ENCODE measurements at regions of chr16 and their contacts with region 1.

Region 1: GRCh38 chr16:1331712-1332617 is 1.5 kb upstream of the BAIAP3 start:
- DNase-seq: peak; percentile 97
- H3K4me3 ChIP-seq: peak overlapping the region; percentile 57
- H3K27ac ChIP-seq: peak overlapping the region; percentile 71
- H3K4me1 ChIP-seq: peaks cover 31% of the 10 kb centered on the region
- CTCF ChIP-seq: no peak

Region 2: DNA sequence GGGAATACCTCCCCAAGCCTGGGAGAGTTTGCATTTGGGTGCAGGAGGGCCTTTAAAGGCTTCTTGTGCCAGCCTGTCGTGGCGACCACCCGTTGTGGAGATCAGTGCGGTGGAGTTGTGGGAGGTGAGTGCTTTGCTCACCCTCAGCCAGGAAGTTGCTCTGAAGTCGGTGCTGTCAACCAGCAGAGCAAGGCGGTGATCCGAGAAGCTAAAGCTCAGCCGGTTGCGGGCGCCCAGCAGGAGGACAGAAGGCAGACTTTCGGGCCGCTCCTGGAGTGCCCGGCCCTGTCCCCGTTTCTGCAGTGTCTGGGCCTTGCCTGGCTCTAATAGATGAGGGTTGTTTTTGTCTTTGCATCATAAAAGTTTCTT is 21.1 kb before region 1 on chr16:
- CTCF ChIA-PET with region 1: no interaction called
- POLR2A ChIA-PET with region 1: no interaction called
- intact Hi-C with region 1: no loop called
- DNase-seq: peak; percentile 71
- H3K4me3 ChIP-seq: peak overlapping the region; percentile 99
- H3K27ac ChIP-seq: peak overlapping the region; percentile 62
- H3K4me1 ChIP-seq: peaks cover 17% of the 10 kb centered on the region
- CTCF ChIP-seq: no peak

Region 3: DNA sequence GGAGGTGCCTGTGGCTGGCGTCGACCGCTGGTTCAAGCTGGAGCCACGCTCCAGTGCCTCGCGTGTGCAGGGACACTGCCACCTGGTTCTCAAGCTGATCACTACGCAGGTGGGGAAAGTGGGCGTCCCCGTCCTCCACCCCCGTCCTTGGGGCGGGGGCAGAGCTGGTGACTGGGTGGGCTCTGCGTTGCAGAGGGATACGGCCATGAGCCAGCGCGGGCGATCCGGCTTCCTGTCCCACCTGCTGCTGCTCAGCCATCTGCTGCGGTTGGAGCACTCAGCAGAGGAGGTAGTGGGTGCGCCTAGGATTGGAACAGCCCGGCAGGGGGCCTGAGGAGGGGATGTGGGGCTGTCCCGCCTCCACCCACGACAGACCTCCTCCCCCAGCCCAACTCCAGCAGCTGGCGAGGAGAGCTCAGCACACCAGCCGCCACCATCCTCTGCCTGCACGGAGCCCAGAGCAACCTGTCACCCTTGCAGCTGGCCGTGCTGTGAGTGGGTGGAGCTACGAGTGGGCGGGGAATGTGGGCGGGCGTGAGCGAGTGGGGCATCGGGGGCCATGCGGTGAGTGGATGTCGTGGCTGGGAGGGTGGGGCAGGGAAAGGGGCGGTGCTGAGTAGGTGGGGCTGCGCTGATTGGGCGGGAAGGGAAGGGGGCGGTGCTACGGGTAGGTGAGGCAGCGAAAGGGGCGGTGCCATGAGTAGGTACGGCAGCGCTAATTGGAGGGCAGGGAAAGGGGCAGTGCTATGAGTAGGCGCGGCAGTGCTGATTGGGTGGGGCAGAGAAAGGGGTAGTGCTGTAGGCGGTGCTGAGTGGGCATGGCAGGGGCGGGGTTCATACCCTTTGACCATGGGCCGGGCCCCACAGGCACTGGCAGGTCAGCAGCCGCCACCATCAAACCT is 10.8 kb after region 1 on chr16:
- CTCF ChIA-PET with region 1: interaction called, 5 read pairs
- POLR2A ChIA-PET with region 1: interaction called, 5 read pairs
- intact Hi-C with region 1: loop called (anchors 1 kb)
- DNase-seq: peak; percentile 98
- H3K4me3 ChIP-seq: peak overlapping the region; percentile 57
- H3K27ac ChIP-seq: peak overlapping the region; percentile 55
- H3K4me1 ChIP-seq: peaks cover 18% of the 10 kb centered on the region
- CTCF ChIP-seq: peak; percentile 31; the same call in 1 of the 2 replicates

Measured in OCI-LY7 (cell line).